ENCODE measurements at regions of chr9 and their contacts with region 1.

Region 1: DNA sequence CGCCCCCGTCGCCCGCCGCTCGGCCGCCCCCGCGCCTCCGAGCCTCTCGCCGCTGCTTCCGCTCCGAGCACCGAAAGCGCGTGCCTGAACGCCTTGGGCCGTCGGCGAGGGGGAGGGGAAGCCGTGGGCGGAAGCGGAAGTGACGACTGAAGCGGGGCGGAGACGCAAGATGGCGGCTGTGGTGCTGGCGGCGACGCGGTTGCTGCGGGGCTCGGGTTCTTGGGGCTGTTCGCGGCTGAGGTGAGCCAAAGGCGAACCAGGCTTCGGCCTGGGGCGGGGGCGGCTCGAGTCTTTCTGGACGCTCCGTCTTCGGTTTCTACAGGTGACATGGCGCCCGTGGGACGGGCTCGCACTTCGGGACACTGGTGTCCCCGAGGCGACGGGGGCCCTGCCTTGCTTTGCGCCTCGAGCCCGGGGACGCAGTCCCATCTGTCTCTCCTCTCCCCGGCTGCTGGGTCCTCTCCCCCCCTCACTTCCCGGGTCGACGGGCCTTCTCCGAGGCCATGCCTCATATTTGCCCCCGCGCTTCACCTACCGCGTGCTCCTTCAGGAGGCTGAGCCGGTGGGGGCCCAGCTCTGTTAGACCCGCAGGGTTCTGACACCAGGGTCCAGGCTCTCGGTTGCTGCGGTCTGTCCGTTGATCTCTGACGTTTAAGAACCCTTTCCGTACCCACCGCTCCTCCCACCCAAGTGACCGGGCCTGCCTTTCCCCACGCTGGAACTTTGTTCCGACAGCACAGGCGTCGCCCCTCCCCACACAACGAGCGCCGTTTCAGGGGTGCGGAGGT is at the starts of genes ENTR1 and PMPCA:
- DNase-seq: peak; percentile 97
- ATAC-seq: peak; percentile 80
- H3K4me3 Mint-ChIP-seq: peak within 1 kb of the TSS; percentile 97
- H3K27ac Mint-ChIP-seq: peak within 1 kb of the TSS; percentile 95
- H3K4me1 Mint-ChIP-seq: peaks cover 48% of the 10 kb centered on the region
- H3K27me3 Mint-ChIP-seq: no peaks in the 10 kb centered on the region
- CTCF ChIP-seq: no peak
- total RNA-seq, gene ENTR1: 65.9 to 66.8 TPM
- total RNA-seq, gene PMPCA: 128 to 140 TPM

Region 2: GRCh38 chr9:136206602-136207275 is 204.0 kb before region 1 on chr9:
- CTCF ChIA-PET with region 1: no interaction called
- POLR2A ChIA-PET with region 1: no interaction called
- intact Hi-C with region 1: no loop called
- DNase-seq: no peak
- ATAC-seq: no peak
- H3K4me3 Mint-ChIP-seq: no peak overlapping the region
- H3K27ac Mint-ChIP-seq: no peak overlapping the region
- H3K4me1 Mint-ChIP-seq: no peaks in the 10 kb centered on the region
- H3K27me3 Mint-ChIP-seq: peaks cover 15% of the 10 kb centered on the region
- CTCF ChIP-seq: no peak

Region 3: DNA sequence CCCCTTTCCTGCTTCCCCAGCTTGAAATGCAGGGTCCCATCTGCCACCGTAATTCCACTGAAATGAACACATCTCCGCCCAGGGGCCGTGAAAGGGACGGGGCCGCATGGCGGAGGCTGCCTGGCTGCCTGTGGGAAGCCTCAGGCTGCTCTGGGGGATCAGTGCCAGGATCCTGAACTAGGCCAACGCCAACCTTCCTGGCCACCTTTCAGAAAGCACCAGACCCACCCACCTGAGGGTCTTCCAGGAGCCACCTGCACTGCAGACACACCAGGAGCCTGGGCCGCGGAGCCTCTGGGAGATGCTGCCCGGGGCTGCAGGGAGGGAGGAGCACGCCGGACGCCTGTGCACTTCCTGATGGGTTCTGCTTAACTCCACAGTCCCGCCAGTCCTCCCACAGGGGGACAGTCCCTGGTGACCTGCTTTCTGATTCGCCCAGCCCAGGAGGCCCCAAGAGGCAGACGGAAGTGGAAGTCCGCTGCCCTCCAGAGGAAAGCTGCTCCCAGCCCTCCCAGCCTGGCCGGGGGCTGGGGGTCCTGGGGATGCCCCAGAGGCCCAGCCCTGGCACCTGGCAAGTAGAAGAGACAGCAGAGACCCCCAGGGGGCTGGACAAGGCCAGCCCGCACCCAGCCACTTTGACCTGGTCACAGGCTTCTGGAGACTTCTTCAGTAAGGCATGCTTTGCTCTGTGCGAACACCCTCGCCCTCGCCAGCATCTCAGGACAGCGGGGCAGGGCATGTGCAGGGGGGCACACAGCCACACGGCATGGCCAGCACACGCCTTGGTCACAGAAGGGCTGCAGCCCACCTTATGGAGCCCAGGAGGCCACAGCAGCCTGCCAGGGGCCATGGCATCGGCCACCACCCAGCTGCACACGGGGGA is 37.2 kb before region 1 on chr9 and contains the start of gene CARD9:
- CTCF ChIA-PET with region 1: no interaction called
- POLR2A ChIA-PET with region 1: no interaction called
- intact Hi-C with region 1: no loop called
- DNase-seq: peak; percentile 40
- ATAC-seq: peak; percentile 66
- H3K4me3 Mint-ChIP-seq: peak within 1 kb of the TSS; percentile 72
- H3K27ac Mint-ChIP-seq: no peak within 1 kb of the TSS
- H3K4me1 Mint-ChIP-seq: peaks cover 8% of the 10 kb centered on the region
- H3K27me3 Mint-ChIP-seq: no peaks in the 10 kb centered on the region
- CTCF ChIP-seq: no peak
- total RNA-seq, gene CARD9: 6.8 to 7.1 TPM

Region 4: DNA sequence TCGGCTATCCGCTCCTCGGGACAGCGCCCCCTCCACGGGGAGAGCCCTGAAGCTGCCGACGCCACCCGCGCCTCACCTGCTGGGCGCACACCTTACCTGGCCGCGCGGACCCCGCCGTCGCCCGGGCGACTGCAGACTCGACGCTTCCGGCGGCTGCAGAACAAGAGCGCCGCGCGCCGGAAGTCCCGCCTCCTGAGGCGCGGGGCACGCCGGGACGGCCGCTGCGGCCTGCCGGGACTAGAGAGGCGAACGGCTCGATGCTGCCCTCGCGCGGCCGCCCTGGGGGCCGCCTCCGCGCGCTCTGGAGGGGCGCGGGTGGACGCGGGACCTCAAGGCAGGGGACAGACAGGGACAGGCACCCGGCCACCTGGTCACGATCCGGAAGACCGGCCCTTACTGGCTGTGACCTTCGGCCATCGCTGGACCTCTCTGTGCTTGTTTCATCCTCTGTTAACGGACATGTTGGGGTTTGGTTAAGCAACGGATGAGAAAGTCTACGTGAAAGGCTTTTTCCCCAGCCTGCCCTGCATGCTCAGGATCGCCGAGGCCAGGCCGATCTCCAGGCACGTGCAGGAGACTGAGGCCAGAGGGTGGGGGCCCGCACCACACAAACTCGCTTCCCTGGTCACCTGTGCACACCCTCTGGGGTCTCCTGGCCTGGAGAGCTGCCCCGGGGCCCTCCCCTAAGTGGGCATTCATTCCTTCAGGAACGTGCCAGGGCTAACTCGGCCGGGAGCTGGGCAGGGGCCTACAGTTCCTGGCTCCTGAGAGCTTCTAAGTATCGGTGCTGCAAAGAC is 10.5 kb before region 1 on chr9 and contains the start of gene SNAPC4:
- CTCF ChIA-PET with region 1: interaction called, 21 read pairs
- POLR2A ChIA-PET with region 1: interaction called, 16 read pairs
- intact Hi-C with region 1: no loop called
- DNase-seq: peak; percentile 87
- ATAC-seq: peak; percentile 64
- H3K4me3 Mint-ChIP-seq: peak within 1 kb of the TSS; percentile 87
- H3K27ac Mint-ChIP-seq: peak within 1 kb of the TSS; percentile 79
- H3K4me1 Mint-ChIP-seq: peaks cover 47% of the 10 kb centered on the region
- H3K27me3 Mint-ChIP-seq: no peaks in the 10 kb centered on the region
- CTCF ChIP-seq: peak; percentile 94
- total RNA-seq, gene SNAPC4: 15.5 to 17.1 TPM

Region 5: GRCh38 chr9:136424750-136425362 is 14.2 kb after region 1 on chr9:
- CTCF ChIA-PET with region 1: interaction called, 6 read pairs
- POLR2A ChIA-PET with region 1: interaction called, 13 read pairs
- intact Hi-C with region 1: no loop called
- DNase-seq: no peak
- ATAC-seq: no peak
- H3K4me3 Mint-ChIP-seq: no peak overlapping the region
- H3K27ac Mint-ChIP-seq: peak overlapping the region; percentile 52
- H3K4me1 Mint-ChIP-seq: no peaks in the 10 kb centered on the region
- H3K27me3 Mint-ChIP-seq: no peaks in the 10 kb centered on the region
- CTCF ChIP-seq: no peak

Region 6: GRCh38 chr9:136467766-136468563 is 57.3 kb after region 1 on chr9:
- CTCF ChIA-PET with region 1: no interaction called
- POLR2A ChIA-PET with region 1: no interaction called
- intact Hi-C with region 1: no loop called
- DNase-seq: no peak
- ATAC-seq: no peak
- H3K4me3 Mint-ChIP-seq: no peak overlapping the region
- H3K27ac Mint-ChIP-seq: no peak overlapping the region
- H3K4me1 Mint-ChIP-seq: no peaks in the 10 kb centered on the region
- H3K27me3 Mint-ChIP-seq: no peaks in the 10 kb centered on the region
- CTCF ChIP-seq: no peak

Region 7: DNA sequence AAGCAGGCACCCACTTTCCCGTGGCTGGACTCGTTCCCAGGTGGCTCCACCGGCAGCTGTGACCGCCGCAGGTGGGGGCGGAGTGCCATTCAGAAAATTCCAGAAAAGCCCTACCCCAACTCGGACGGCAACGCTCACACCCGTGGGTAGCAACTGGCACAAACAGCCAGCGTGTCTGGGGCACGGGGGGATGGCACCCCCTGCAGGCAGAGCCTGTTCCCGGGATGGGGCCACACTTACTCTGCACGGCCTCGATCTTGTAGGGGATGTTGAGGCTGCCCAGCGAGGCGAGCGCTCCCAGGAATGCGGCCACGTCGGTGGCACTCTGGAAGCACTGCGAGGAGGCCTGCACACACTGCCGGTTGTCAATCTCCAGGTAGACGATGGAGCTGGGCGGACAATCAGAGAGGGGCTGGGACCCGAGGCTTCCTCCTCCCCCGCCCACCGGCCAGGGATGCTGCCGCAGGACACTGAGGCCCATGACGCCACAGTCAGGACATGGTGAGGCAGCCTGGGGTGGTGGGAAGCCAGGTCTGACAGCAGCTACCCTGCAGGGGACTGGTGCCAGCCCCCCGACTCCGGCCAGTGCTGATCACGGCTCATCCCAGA is 92.4 kb after region 1 on chr9:
- CTCF ChIA-PET with region 1: no interaction called
- POLR2A ChIA-PET with region 1: no interaction called
- intact Hi-C with region 1: no loop called
- DNase-seq: no peak
- ATAC-seq: no peak
- H3K4me3 Mint-ChIP-seq: no peak overlapping the region
- H3K27ac Mint-ChIP-seq: no peak overlapping the region
- H3K4me1 Mint-ChIP-seq: no peaks in the 10 kb centered on the region
- H3K27me3 Mint-ChIP-seq: no peaks in the 10 kb centered on the region
- CTCF ChIP-seq: no peak